ENCODE measurements at regions of chr7 and their contacts with region 1.

Region 1: GRCh38 chr7:131057015-131057793 is 270.5 kb upstream of the MKLN1 start:
- DNase-seq: no peak
- H3K4me3 ChIP-seq: no peak overlapping the region
- H3K27ac ChIP-seq: peak overlapping the region; percentile 47
- H3K4me1 ChIP-seq: peaks cover 13% of the 10 kb centered on the region
- H3K27me3 ChIP-seq: no peaks in the 10 kb centered on the region
- CTCF ChIP-seq: no peak

Region 2: DNA sequence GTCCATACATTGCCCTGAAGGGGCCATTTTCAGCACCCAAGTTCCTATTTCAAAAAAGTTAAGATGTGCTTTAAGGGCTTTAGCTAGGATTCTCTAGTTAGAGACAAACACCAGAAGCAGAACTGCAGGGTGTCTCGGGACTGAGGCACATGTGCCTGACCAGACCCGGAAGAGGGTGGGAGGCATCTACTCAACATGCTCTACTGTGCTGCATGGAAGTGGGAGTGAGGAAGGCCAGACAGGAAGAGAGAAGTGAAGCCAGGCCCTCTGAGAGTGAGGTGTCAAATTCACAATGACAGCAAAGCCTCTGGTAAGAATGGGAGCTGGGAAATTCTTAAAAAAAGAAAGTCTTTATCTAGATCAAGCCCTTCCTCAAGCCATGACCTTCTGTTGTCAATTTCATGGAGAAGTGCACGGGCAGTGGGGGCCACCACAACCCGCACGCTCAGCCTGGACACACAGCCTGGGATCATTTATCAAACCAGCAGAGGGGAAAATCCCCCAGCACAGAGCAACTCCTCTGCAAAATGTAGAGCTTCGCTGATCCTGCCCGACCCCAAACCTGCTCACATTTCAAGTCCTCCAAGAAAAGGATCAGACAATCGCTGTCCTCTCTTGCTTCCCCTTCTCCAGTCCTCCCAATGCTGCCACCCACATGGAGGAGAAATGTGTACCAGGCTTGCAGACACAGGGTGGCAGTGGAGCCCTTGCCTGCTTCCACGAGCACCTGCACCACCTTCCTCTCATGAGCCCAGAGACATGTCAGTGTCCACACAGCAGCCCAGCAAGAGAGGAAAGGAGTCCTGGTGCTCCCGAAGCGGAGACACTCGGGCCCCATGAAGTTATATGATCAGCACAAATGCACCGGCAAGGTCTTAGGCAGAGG is 1480.5 kb after region 1 on chr7:
- CTCF ChIA-PET with region 1: no interaction called
- POLR2A ChIA-PET with region 1: interaction called, 15 read pairs
- intact Hi-C with region 1: no loop called
- DNase-seq: no peak
- H3K4me3 ChIP-seq: no peak overlapping the region
- H3K27ac ChIP-seq: no peak overlapping the region
- H3K4me1 ChIP-seq: no peaks in the 10 kb centered on the region
- H3K27me3 ChIP-seq: no peaks in the 10 kb centered on the region
- CTCF ChIP-seq: no peak